ENCODE measurements at regions of chr3 and their contacts with region 1.

Region 1: DNA sequence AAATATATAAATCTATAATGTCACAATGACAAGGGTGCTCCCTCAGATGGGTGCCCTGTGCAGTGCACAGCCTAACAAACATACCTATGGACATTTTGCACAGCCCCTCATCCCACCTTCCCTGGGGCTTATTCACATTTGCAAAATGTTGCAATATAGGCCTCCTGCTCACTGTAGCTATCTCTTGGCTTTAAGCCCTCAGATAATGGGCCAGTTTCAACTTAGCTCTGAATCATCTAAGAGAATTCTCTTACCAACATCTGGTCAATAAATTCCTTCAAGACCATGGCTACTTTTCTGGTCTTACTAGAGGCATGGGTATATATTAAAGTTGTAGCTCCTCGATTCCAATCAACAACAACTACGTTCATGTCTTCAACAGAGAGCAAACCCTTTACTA is 17.9 kb downstream of the LIPH start:
- DNase-seq: no peak
- ATAC-seq: no peak
- H3K4me3 Mint-ChIP-seq: no peak overlapping the region
- H3K27ac Mint-ChIP-seq: no peak overlapping the region
- H3K4me1 Mint-ChIP-seq: peaks cover 7% of the 10 kb centered on the region
- H3K27me3 Mint-ChIP-seq: peaks cover 4% of the 10 kb centered on the region
- CTCF ChIP-seq: no peak

Region 2: DNA sequence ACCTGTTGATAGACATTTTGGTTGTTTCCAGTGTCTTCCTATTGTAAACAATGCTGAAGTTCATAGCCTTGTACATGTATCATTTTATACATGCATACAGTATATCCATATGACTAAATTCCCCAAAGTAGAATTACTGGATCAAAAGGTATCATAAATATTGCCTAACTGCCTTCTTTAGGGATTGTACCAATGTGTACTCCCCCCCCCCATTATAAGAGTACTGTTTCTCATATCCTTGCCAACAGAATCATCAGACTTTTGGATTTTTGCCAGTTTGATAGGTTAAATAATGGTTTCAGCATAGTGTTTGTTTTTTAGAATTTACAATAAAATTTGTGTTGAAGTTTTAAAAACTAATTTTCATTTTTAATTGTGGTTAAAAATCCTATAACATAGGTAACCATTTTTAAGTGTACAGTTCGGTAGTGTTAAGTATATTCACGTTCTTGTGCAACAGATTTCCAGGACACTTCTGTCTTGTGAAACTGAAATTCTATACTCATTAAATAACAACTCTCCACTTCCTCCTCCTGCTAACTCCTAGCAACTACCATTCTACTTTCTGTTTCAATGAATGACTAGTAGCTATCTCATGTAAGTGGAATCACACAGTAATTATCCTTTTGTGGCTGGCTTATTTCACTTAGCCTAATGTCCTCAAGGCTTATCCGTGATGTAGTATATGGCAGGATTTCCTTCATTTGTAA is 202.3 kb before region 1 on chr3:
- CTCF ChIA-PET with region 1: no interaction called
- POLR2A ChIA-PET with region 1: no interaction called
- intact Hi-C with region 1: no loop called
- DNase-seq: no peak
- ATAC-seq: peak; percentile 86
- H3K4me3 Mint-ChIP-seq: no peak overlapping the region
- H3K27ac Mint-ChIP-seq: no peak overlapping the region
- H3K4me1 Mint-ChIP-seq: peaks cover 7% of the 10 kb centered on the region
- H3K27me3 Mint-ChIP-seq: peaks cover 1% of the 10 kb centered on the region
- CTCF ChIP-seq: no peak

Region 3: DNA sequence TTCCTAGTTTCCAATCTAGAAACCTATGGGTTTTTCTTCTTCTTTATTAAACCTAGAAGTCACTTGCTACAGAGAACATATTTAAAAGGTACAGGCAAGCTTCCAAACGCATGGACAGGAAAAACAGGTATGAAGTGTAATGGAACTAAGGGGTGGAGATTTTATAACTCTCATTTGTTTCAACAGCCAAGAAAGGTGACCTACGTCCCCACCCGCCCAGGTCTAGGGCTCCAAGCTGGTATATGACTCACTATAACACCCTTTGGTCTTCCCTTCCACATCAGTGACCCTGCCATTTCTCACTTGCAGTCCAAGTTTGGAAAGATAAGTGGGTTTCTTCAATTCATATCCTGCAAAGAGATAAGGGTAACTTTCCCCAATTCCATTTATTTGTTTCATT is 23.9 kb after region 1 on chr3:
- CTCF ChIA-PET with region 1: interaction called, 10 read pairs
- POLR2A ChIA-PET with region 1: no interaction called
- intact Hi-C with region 1: no loop called
- DNase-seq: no peak
- ATAC-seq: no peak
- H3K4me3 Mint-ChIP-seq: no peak overlapping the region
- H3K27ac Mint-ChIP-seq: no peak overlapping the region
- H3K4me1 Mint-ChIP-seq: peaks cover 21% of the 10 kb centered on the region
- H3K27me3 Mint-ChIP-seq: peaks cover 3% of the 10 kb centered on the region
- CTCF ChIP-seq: no peak